H1 (cell line): ENCODE measurements at regions of chr18 and their contacts with region 1.

Region 1: DNA sequence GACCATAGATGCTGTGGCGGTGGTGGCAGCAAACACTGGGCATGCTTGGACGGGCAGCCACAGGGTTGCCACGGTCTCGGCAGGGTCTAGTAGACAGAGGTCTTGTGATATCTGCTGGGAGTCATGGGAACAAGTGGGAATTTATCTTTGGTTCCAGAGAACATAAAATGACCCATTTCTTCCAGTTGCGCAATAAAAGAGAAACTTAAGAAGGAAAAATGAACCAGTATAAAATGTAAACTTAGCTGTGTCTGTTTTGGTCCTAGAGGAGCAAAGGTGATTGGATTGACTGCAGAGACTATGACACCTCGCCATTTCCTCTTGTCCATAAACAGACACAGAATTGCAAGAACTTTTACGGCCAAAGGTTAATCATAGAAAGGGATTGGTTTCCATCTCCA is 132.6 kb upstream of the RBBP8 start:
- DNase-seq: no peak
- H3K4me3 ChIP-seq: no peak overlapping the region
- H3K27ac ChIP-seq: no peak overlapping the region
- H3K4me1 ChIP-seq: no peaks in the 10 kb centered on the region; a peak in 1 of 7 replicates
- H3K27me3 ChIP-seq: no peaks in the 10 kb centered on the region
- CTCF ChIP-seq: no peak
- EP300 ChIP-seq: no peak
- POLR2A ChIP-seq: no peak
- RAD21 ChIP-seq: no peak

Region 2: GRCh38 chr18:22773944-22774343 is 26.6 kb before region 1 on chr18:
- CTCF ChIA-PET with region 1: interaction called, 10 read pairs
- POLR2A ChIA-PET with region 1: no interaction called
- DNase-seq: no peak
- H3K4me3 ChIP-seq: no peak overlapping the region
- H3K27ac ChIP-seq: no peak overlapping the region
- H3K4me1 ChIP-seq: no peaks in the 10 kb centered on the region
- H3K27me3 ChIP-seq: peaks cover 0 to 1% (median 0%) of the 10 kb centered on the region in 4 experiments; a peak in 1 of 7 replicates
- CTCF ChIP-seq: no peak
- EP300 ChIP-seq: no peak
- POLR2A ChIP-seq: no peak
- RAD21 ChIP-seq: no peak

Region 3: GRCh38 chr18:22789600-22789999 is 11.0 kb before region 1 on chr18:
- CTCF ChIA-PET with region 1: no interaction called
- POLR2A ChIA-PET with region 1: no interaction called
- DNase-seq: no peak
- H3K4me3 ChIP-seq: no peak overlapping the region
- H3K27ac ChIP-seq: no peak overlapping the region
- H3K4me1 ChIP-seq: no peaks in the 10 kb centered on the region
- H3K27me3 ChIP-seq: no peaks in the 10 kb centered on the region
- CTCF ChIP-seq: no peak
- EP300 ChIP-seq: no peak
- POLR2A ChIP-seq: no peak
- RAD21 ChIP-seq: no peak

Region 4: DNA sequence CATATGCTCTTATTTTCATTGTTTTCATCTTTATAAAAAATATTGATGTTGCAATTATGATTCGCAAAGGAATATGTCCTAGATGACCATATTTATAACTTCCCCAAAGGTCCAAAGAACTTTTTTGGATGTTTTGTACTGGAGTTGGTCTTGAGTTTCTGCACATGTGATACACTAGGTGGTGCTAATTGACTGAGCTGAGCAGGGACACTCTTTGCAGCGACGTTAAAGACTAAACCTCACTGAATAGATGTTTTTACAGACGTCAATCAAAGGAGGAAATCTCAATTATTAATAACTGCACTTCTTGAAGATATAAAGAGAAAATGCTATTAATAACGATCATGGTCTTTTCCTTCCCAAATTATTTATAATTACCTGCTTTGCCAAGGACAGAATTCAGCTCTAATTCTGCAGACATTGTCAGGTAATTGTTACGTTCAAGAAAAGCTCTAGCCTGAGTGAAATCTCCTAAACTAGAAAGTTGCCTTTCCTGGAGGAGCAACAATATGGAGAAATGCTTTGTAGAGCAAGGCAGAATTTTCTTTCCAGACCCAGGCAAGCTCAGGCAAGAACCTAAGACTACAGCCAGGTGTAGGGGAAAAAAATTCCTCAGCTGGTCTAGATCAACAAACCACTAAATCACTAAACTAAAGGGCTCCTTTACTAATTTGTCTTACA is 13.2 kb after region 1 on chr18:
- CTCF ChIA-PET with region 1: interaction called, 17 read pairs
- POLR2A ChIA-PET with region 1: interaction called, 3 read pairs
- DNase-seq: no peak
- H3K4me3 ChIP-seq: no peak overlapping the region
- H3K27ac ChIP-seq: no peak overlapping the region
- H3K4me1 ChIP-seq: no peaks in the 10 kb centered on the region; a peak in 1 of 7 replicates
- H3K27me3 ChIP-seq: no peaks in the 10 kb centered on the region
- CTCF ChIP-seq: peak in 2 of 3 experiments; percentile 65 to 70; a peak in 3 of 4 replicates
- EP300 ChIP-seq: no peak
- POLR2A ChIP-seq: no peak
- RAD21 ChIP-seq: peak; percentile 96 to 98

Region 5: GRCh38 chr18:22846088-22846683 is 45.6 kb after region 1 on chr18:
- CTCF ChIA-PET with region 1: no interaction called
- POLR2A ChIA-PET with region 1: no interaction called
- DNase-seq: no peak
- H3K4me3 ChIP-seq: no peak overlapping the region
- H3K27ac ChIP-seq: no peak overlapping the region
- H3K4me1 ChIP-seq: no peaks in the 10 kb centered on the region
- H3K27me3 ChIP-seq: no peaks in the 10 kb centered on the region
- CTCF ChIP-seq: no peak; a peak in 1 of 4 replicates
- EP300 ChIP-seq: no peak
- POLR2A ChIP-seq: no peak
- RAD21 ChIP-seq: peak in 1 of 2 experiments; percentile 32; a peak in 2 of 4 replicates

Region 6: GRCh38 chr18:22933206-22933957 is 132.8 kb after region 1 on chr18 and contains the start of gene RBBP8:
- CTCF ChIA-PET with region 1: interaction called, 13 read pairs
- POLR2A ChIA-PET with region 1: no interaction called
- DNase-seq: peak; percentile 67 to 90
- H3K4me3 ChIP-seq: peak within 1 kb of the TSS; percentile 54 to 90 (median 84)
- H3K27ac ChIP-seq: peak within 1 kb of the TSS; percentile 86
- H3K4me1 ChIP-seq: peaks cover 0 to 2% (median 0%) of the 10 kb centered on the region in 4 experiments; a peak in 1 of 7 replicates
- H3K27me3 ChIP-seq: no peaks in the 10 kb centered on the region
- CTCF ChIP-seq: 0 out of 4 replicates have a peak, but pooled peaks of 1 of the 3 experiments have one; percentile 2
- EP300 ChIP-seq: no peak
- POLR2A ChIP-seq: peak in 1 of 2 experiments; percentile 29; a peak in 1 of 3 replicates
- RAD21 ChIP-seq: 0 out of 4 replicates have a peak, but pooled peaks of 1 of the 2 experiments have one; percentile 5
- total RNA-seq, gene RBBP8: 63.4 and 65.8 TPM in 2 replicates

Region 7: GRCh38 chr18:22983175-22983574 is 182.6 kb after region 1 on chr18:
- CTCF ChIA-PET with region 1: interaction called, 12 read pairs
- POLR2A ChIA-PET with region 1: no interaction called
- DNase-seq: no peak
- H3K4me3 ChIP-seq: no peak overlapping the region
- H3K27ac ChIP-seq: no peak overlapping the region
- H3K4me1 ChIP-seq: no peaks in the 10 kb centered on the region
- H3K27me3 ChIP-seq: no peaks in the 10 kb centered on the region
- CTCF ChIP-seq: peak in 2 of 3 experiments; percentile 20 to 23; a peak in 2 of 4 replicates
- EP300 ChIP-seq: no peak
- POLR2A ChIP-seq: no peak
- RAD21 ChIP-seq: peak in 1 of 2 experiments; percentile 58; a peak in 3 of 4 replicates

Region 8: DNA sequence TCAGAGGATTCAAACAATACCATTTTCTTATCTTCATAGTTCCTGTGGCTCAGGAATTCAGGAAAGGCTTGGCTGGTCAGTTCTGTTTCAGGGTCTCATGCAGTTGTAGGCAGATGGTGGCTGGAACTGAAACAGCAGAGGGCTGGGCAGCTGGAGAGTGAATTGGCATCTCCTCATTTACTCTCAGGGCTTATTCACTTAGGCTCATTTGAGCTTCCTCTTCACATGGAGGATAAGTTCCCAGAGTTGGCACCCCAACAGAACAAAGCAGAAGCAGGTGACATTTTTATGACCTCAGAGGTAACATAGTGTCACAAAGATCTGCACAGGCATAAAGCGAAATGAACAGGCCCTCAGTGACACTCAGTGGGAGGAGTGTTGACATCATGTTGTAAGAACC is 198.7 kb after region 1 on chr18:
- CTCF ChIA-PET with region 1: interaction called, 10 read pairs
- POLR2A ChIA-PET with region 1: no interaction called
- DNase-seq: no peak
- H3K4me3 ChIP-seq: no peak overlapping the region
- H3K27ac ChIP-seq: no peak overlapping the region
- H3K4me1 ChIP-seq: no peaks in the 10 kb centered on the region
- H3K27me3 ChIP-seq: no peaks in the 10 kb centered on the region
- CTCF ChIP-seq: no peak
- EP300 ChIP-seq: no peak
- POLR2A ChIP-seq: no peak
- RAD21 ChIP-seq: no peak